Activated CD4-positive, alpha-beta T cell treated with anti-CD3 and anti-CD28 coated beads, Interleukin-2, amount 10 ng/mL, durations not matched to agents 24 days and 14 days (primary cell): ENCODE measurements at regions of chr6 and their contacts with region 1.

Region 1: GRCh38 chr6:149316798-149317655 is 485 bp upstream of the TAB2 start:
- DNase-seq: peak; percentile 97
- H3K4me3 Mint-ChIP-seq: peak overlapping the region; percentile 91
- H3K27ac Mint-ChIP-seq: peak overlapping the region; percentile 92
- H3K4me1 Mint-ChIP-seq: peaks cover 35% of the 10 kb centered on the region
- H3K27me3 Mint-ChIP-seq: no peaks in the 10 kb centered on the region

Region 2: DNA sequence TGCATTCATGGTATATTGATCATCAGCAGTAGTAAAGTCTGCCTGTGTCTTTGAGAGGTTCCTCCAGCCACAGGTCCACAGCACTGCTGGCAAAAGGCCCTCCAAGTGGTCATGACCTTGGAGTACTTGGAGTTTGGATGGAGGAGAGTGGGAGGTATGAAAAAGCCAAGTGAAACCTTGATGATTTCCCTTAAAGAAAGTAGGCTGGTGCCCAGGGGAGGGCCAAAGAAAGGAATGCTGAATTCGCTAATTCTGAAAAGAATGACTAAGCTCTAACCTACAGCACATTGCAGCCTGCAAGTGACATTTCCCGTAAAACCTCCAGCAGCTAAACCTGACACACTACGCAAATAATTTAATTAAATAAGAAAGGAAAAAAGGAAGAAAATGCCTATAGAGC is 222.9 kb before region 1 on chr6:
- intact Hi-C with region 1: loop called (anchors 1 kb)
- DNase-seq: peak; percentile 76
- H3K4me3 Mint-ChIP-seq: peak overlapping the region; percentile 71
- H3K27ac Mint-ChIP-seq: peak overlapping the region; percentile 95
- H3K4me1 Mint-ChIP-seq: peaks cover 74% of the 10 kb centered on the region
- H3K27me3 Mint-ChIP-seq: no peaks in the 10 kb centered on the region

Region 3: GRCh38 chr6:149211046-149211571 is 105.9 kb before region 1 on chr6:
- intact Hi-C with region 1: loop called (anchors 1 kb)
- DNase-seq: peak; percentile 74
- H3K4me3 Mint-ChIP-seq: no peak overlapping the region
- H3K27ac Mint-ChIP-seq: no peak overlapping the region
- H3K4me1 Mint-ChIP-seq: peaks cover 29% of the 10 kb centered on the region
- H3K27me3 Mint-ChIP-seq: no peaks in the 10 kb centered on the region

Region 4: DNA sequence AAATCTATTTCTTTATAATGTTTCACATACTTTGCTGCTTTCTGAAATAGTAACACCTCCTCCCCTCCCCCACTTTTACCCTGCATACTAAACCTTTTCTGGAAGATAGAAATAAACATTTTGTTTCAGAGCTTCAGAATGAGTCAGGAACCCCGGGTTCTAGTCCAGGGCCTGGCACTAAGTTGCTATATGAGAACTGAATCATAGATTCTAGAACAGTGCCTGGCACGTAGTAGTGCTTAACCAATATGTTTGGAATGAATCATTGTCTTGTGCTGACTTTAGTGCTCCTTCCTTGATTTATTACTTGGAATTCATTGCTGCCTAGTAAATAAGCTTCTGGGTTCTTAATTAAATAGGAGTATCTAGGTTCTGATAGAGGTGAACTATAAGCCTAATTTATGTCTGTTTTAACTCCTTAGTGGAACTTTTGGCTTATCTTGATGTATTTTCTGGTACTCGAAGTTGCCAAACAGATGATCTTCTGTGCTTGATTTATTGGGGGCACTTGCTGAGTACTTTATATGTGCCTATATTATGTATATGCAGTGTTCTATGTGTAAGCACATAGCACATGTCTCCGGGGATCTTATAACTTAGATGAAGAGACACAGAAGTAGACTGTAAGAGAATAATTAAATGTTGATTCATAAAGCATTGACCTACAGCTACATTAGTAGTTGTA is 19.0 kb after region 1 on chr6:
- intact Hi-C with region 1: loop called (anchors 1 kb)
- DNase-seq: peak; percentile 72
- H3K4me3 Mint-ChIP-seq: peak overlapping the region; percentile 74
- H3K27ac Mint-ChIP-seq: peak overlapping the region; percentile 87
- H3K4me1 Mint-ChIP-seq: peaks cover 69% of the 10 kb centered on the region
- H3K27me3 Mint-ChIP-seq: no peaks in the 10 kb centered on the region

Region 5: GRCh38 chr6:149499066-149499465 is 182.0 kb after region 1 on chr6:
- intact Hi-C with region 1: loop called (anchors 5 kb)
- DNase-seq: peak; percentile 38
- H3K4me3 Mint-ChIP-seq: no peak overlapping the region
- H3K27ac Mint-ChIP-seq: peak overlapping the region; percentile 48
- H3K4me1 Mint-ChIP-seq: peaks cover 63% of the 10 kb centered on the region
- H3K27me3 Mint-ChIP-seq: no peaks in the 10 kb centered on the region